AG04449 (cell line): ENCODE measurements at regions of chr2 and their contacts with region 1.

Region 1: GRCh38 chr2:105454801-105455485 is 56.1 kb upstream of the FHL2 start:
- DNase-seq: peak; percentile 53
- H3K4me3 ChIP-seq: no peak overlapping the region
- CTCF ChIP-seq: peak; percentile 52

Region 2: DNA sequence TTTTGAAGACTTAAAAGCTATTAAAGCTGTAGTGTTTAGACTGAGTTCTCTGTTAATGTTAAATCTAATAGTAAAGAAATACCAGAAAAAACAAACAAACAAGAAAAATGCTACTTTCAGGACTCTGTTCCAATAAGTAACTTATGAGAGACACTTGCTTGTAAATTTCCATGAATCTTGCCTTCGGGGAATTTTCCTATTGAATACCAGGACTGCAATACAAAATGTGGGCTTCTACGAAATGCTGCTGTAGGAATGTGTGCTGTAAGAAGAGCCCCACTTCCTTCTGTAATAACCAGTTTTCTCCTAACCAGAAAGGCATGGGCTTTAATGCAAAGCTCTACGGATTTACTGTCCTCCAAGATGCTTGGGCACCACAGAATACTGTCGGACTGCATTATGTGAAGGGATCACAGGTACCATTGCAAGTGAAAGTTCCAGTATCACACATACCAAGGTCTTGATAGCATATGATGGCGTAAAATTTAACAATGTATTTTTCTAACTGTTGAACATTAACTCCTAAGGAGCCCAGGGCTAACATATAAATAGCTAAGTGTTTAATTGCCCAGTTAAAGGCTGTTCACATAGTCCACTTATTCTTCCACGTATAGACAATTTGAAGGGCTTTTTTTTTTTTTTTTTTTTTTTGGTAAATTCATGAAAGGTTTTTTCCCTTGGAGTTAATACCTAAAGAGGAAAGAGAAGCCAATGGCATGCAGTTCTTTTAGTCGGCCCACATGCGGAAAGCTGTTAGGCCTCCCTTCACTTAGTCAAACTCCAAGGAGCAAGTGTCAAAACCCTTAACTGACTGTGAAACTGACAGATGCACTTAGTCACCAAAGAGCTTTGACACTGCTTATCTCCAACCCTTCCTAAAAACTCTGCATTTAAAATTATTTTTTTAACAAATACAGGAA is 1165.0 kb before region 1 on chr2:
- CTCF ChIA-PET with region 1: no interaction called
- POLR2A ChIA-PET with region 1: no interaction called
- DNase-seq: no peak
- H3K4me3 ChIP-seq: no peak overlapping the region
- CTCF ChIP-seq: no peak

Region 3: DNA sequence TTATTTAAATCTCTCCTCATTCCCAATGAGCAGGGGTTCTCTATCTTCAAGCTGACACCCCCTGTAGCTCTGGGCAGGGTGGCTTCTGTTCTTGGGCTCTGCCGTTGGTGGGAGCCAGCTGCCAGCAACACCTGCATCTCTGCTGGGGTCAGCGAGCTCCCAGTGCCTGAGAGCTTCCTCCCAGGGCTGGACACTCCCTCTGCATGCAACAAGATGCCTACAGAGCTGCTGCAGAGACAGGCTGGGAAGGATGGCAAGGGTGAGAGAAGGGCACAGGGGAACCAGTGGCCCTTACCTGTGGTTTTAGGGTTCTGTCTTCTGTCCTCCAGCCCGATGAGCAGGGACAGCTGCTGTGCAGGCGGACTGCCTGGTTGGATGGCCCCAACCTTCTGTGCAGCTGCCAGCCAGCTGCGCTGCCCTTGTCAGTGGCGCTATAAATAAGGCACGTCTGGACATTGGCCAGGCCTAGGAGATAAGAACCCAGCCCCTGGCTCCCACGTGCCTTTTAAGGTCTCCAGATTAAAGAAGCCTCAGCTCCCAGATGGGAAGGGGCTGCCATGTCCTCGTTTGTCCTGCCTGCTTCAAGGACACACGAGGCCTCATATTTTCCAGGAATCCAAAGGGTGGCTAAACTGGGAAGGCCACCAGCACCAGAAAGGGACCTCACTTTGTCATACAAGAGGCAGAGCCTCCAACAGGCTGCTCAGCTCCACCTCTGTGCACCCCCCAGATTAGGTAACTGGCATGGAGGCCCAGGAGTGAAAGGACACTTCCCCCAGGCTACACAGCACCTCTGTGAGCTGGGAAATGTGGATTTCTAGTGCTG is 16.6 kb before region 1 on chr2:
- CTCF ChIA-PET with region 1: interaction called, 16 read pairs
- POLR2A ChIA-PET with region 1: interaction called, 7 read pairs
- DNase-seq: no peak
- H3K4me3 ChIP-seq: peak overlapping the region; percentile 12; the same call in 1 of the 2 replicates
- CTCF ChIP-seq: no peak

Region 4: DNA sequence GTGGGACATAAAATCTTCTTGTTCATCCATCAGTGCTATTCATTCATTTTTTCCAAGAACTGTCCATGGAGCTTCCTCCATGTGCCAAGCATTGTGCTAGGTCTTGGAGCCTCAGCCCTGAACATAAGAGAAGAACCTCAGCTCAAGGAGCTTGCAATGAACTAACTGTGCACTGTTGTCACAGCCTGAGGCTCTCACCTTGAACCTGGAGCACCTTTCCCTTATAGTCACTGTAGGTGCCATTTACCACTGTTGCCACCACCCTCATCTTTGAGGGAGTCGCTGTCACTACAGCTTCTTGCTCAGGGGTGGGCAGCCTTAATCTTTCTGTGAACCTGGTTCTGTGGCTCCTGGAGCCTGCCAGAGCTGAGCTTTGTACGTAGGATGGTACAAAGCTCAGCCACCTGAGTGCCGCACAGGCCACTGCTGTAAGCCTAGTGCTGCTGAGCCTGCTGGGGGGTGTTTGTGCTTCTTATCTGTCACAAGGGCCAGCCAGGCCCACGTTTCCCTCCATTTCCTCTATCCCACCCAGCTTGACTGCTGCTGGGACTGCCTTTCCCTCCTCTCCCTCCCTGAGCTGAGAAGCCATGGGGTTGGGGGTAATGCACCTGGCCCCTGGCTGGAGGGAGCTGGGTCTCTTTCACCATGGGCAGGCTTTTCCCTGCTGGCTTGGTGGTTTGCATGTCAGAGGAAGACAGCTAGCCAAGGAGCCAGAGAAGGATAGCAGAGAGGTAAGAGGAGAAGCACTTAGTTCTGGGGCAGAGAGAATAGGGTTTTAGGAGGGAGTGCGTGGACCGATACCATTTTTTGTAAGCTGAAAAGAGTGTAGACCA is 11.3 kb before region 1 on chr2:
- CTCF ChIA-PET with region 1: interaction called, 16 read pairs
- POLR2A ChIA-PET with region 1: interaction called, 7 read pairs
- DNase-seq: no peak
- H3K4me3 ChIP-seq: no peak overlapping the region
- CTCF ChIP-seq: no peak